Gastrocnemius medialis (tissue), 4 donors: ENCODE measurements at regions of chr3 and their contacts with region 1.

Region 1: DNA sequence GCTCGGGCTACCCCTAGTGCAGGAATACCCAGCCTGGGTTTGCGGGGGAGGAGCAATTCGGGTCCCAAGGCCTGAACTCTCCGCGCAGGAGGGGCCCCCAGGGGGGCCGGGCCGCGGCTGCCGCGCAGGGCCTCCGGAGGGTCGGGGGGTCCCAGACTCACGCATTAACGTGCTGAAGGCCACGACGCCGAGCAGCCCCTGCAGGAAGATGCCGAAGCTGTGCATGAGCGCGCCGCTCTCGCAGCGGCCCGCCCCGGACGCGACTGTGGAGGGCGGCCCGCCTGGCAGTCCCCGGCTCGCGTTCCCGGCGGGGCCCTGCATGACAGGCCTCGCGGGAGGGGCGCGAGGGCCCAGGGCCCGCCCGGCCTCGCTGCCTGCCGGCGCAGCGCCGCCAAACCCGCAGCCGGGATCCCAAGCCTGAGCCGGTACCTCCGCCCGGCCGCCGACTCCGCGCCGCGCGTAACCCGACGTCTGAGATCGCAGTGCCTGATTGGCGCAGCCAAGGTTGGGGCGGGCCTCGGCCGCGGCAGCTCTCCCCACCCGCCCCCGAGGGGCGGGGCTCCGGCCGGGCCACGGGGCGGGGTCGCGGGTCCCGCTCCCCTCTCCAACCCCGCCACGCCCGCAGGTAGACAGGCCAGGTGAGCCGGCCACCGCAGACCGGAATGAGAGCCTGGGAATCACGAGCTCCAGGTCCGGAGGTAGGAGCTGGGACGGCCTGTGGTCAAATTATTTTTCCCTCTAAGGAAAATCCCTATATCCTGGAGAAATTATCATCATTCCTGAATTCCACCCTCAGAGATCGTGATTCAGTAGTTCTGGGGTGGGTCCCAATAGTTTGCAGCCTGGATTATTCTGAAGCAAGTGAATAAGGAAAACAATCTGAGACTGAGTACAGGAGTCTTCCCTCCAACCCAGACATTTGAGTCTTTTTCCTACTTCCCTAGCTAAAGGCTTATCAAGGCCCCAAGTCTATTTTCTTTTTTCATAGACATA is at the start of gene STIMATE:
- DNase-seq: peak; percentile 77 to 85
- ATAC-seq: peak; percentile 84
- H3K4me3 ChIP-seq: peak within 1 kb of the TSS; percentile 71 to 91 (median 80)
- H3K27ac ChIP-seq: peak within 1 kb of the TSS; percentile 77 to 85 (median 82)
- H3K4me1 ChIP-seq: peaks cover 46 to 49% of the 10 kb centered on the region in 2 donors
- H3K27me3 ChIP-seq: no peaks in the 10 kb centered on the region
- CTCF ChIP-seq: peak in 2 of 5 experiments; percentile 8 to 13
- POLR2A ChIP-seq: peak; percentile 67 to 80
- total RNA-seq, gene STIMATE: 20.6 to 64.6 (median 27.8) TPM

Region 2: DNA sequence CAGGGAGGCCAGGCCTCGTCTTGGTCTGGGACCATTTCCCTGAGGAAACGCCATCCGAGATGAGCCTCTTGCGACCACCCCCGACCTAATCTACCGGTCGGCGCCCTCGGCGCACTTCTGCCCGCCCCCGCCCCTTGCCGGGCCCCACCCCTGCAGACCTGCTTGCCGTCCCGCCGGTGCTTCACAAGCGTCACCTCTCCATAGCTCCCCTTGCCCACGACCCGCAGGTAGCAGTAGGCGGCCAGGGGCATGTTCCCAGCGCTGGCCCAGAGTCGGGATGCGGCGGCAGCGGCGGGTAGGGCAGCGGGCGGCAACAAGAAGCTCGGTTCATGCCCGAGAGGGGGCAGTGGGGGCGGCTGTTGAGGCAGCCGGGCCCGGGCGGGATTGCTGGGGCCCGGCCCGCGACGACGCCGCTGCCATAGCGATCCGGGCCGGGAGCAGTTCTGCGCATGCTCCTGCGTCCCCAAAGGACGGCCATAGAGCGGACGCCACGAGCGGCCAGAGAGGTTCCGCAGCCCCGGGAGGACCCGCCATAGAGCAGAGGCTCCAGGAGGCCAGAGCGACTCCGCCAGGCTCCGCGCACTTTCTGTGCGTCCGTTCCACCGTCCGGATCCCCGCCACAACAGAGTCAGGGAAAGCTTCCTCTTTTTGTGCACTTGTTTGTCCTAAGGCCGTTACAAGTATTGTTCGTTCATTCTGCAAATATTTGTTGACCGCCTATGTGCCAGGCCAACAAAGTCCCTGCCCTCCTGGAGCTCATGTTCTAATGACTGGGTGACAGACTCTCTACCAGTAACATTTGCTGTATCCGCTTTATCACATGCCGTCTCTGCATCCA is 126.7 kb before region 1 on chr3 and contains the start of gene NEK4:
- in situ Hi-C with region 1: no loop called
- intact Hi-C with region 1: loop called (anchors 5 kb)
- DNase-seq: peak; percentile 84 to 90
- ATAC-seq: peak; percentile 96 to 97
- H3K4me3 ChIP-seq: peak within 1 kb of the TSS; percentile 83 to 97 (median 96)
- H3K27ac ChIP-seq: peak within 1 kb of the TSS; percentile 80 to 89 (median 84)
- H3K4me1 ChIP-seq: peaks cover 12 to 16% of the 10 kb centered on the region in 2 donors
- H3K27me3 ChIP-seq: no peaks in the 10 kb centered on the region
- CTCF ChIP-seq: no peak
- POLR2A ChIP-seq: peak; percentile 52 to 75
- total RNA-seq, gene NEK4: 16.4 to 25.6 (median 22.4) TPM

Region 3: GRCh38 chr3:52831500-52832301 is 65.7 kb before region 1 on chr3:
- in situ Hi-C with region 1: no loop called
- intact Hi-C with region 1: loop called (anchors 5 kb)
- DNase-seq: peak; percentile 90 to 95
- ATAC-seq: peak; percentile 51 to 53
- H3K4me3 ChIP-seq: peak overlapping the region in 3 of 4 donors; percentile 3 to 36 (median 15)
- H3K27ac ChIP-seq: peak overlapping the region; percentile 96 to 98 (median 97)
- H3K4me1 ChIP-seq: peaks cover 60 to 66% of the 10 kb centered on the region in 2 donors
- H3K27me3 ChIP-seq: no peaks in the 10 kb centered on the region
- CTCF ChIP-seq: no peak
- POLR2A ChIP-seq: peak; percentile 54 to 66

Region 4: DNA sequence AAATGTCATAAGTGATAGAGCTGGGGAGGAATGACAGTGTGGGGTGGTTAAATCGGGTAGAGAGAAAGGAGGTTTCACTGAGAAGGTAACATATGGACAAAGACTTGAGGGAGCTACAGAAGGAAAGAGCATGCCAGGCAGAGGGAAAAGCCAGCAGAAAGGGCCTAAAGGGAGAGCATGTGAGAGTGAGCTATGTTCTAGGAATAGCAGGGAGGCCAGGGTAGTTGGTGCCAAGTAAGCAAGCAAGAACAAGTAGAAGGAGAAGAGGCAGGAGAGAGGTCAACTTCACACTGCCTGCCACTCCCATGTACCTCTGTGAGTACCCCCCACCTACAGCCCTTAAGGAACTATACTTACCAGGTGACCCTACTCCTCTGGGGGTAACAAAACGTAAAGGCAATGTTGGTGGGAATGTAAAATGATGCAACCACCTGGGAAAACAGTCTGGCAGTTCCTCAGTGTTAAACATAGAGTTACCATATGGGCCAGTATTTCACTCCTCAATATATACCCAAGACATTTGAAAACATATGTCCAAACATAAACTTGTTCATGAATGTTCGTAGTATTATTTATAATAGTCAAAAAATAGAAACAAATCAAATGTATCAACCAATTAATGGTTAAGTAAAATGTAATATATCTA is 80.8 kb after region 1 on chr3:
- in situ Hi-C with region 1: no loop called
- intact Hi-C with region 1: loop called (anchors 5 kb)
- DNase-seq: peak; percentile 74 to 84
- ATAC-seq: peak; percentile 99 to 100
- H3K4me3 ChIP-seq: peak overlapping the region in 1 of 4 donors; percentile 22
- H3K27ac ChIP-seq: peak overlapping the region; percentile 88 to 92 (median 88)
- H3K4me1 ChIP-seq: peaks cover 20 to 23% of the 10 kb centered on the region in 2 donors
- H3K27me3 ChIP-seq: no peaks in the 10 kb centered on the region
- CTCF ChIP-seq: no peak
- POLR2A ChIP-seq: peak; percentile 34 to 73